Tibial artery (tissue), 4 donors: ENCODE measurements at regions of chr7 and their contacts with region 1.

Region 1: GRCh38 chr7:129864042-129864441 is 88.7 kb downstream of the UBE2H start:
- DNase-seq: peak; percentile 67 to 80
- H3K4me3 ChIP-seq: no peak overlapping the region
- H3K27ac ChIP-seq: peak overlapping the region; percentile 81 to 82
- H3K4me1 ChIP-seq: peaks cover 0 to 89% (median 68%) of the 10 kb centered on the region in 4 donors
- H3K27me3 ChIP-seq: no peaks in the 10 kb centered on the region
- CTCF ChIP-seq: no peak

Region 2: GRCh38 chr7:129948877-129949291 is 84.8 kb after region 1 on chr7:
- intact Hi-C with region 1: loop called (anchors 10 kb)
- DNase-seq: peak; percentile 91 to 93
- H3K4me3 ChIP-seq: peak overlapping the region; percentile 78 to 97
- H3K27ac ChIP-seq: peak overlapping the region; percentile 90 to 99
- H3K4me1 ChIP-seq: peaks cover 0 to 56% (median 28%) of the 10 kb centered on the region in 4 donors
- H3K27me3 ChIP-seq: no peaks in the 10 kb centered on the region
- CTCF ChIP-seq: no peak